Aorta (tissue), 5 donors: ENCODE measurements at regions of chr17 and their contacts with region 1.

Region 1: DNA sequence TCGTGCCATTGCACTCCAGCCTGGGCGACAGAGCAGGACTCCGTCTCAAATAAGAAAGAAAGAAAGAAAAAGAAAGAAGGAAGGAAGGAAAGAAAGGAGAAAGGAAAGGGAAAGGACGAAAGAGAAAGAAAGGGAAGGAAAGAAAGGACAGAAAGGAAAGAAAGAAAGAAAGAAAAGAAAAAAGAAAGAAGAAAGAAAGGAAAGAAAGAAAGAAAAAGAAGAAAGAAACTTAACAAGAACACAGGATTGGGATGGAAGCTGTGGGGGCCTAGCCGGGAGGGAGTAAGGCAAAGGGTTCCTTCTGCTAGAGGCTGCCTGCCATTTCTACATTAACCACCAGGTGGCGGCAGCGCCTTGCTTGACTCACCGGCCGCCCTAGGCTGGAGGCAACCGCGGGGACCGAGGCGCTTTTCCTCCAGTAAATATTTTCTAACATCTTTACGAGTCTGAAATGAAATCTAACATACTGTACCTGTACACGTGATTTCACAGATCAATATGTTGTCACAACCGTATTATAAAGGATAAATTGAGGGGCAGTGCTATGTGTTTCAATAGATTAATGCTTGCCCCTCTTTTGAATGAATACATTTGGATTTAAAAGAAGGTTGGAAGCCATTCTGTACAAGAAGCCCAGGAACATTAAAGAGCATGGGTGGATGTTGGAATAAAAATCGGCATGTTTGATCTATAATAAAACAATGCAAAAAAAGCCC is 6.1 kb downstream of the GJD3 start:
- DNase-seq: peak; percentile 92 to 97
- ATAC-seq: peak; percentile 88
- H3K4me3 ChIP-seq: no peak overlapping the region
- H3K27ac ChIP-seq: no peak overlapping the region
- H3K4me1 ChIP-seq: no peaks in the 10 kb centered on the region
- H3K27me3 ChIP-seq: no peaks in the 10 kb centered on the region

Region 2: DNA sequence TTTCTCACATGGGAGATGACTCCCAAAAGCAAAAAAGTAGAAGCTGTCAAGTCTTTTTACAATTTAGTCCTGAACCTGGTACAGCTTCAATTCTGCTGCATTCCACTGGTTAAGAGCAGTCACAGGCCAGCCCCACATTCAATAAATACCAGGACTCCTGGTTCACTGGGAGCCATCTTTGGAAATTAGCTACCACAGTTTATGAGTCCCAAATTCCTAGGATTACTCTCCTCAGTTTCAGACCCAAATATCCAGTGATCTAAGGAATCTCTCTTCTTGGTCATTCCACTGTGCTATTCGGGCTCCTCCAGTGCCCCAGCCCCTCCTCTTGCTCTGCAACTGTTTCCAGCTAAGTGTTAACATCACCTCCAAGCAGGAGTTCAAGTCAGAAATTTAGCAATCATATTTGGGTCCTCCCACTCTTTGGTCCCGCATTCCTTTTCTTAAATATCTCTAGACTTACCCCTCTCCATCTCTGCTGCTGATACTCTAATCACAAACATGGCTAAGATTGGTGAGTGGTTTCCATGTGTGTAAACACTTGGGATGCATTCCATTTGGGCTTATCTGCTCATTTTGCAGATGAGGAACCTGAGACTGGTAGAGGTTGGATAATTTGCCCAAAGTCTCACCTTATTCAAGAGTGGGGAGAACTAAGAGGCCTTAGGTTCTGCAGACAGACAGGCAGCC is 148.9 kb before region 1 on chr17:
- intact Hi-C with region 1: loop called in 1 of 2 experiments (anchors 10 kb)
- DNase-seq: no peak
- ATAC-seq: no peak
- H3K4me3 ChIP-seq: no peak overlapping the region
- H3K27ac ChIP-seq: no peak overlapping the region
- H3K4me1 ChIP-seq: no peaks in the 10 kb centered on the region
- H3K27me3 ChIP-seq: no peaks in the 10 kb centered on the region

Region 3: GRCh38 chr17:40303009-40303657 is 55.3 kb before region 1 on chr17:
- intact Hi-C with region 1: loop called (anchors 1 to 2 kb)
- DNase-seq: no peak
- ATAC-seq: peak; percentile 74
- H3K4me3 ChIP-seq: no peak overlapping the region
- H3K27ac ChIP-seq: no peak overlapping the region
- H3K4me1 ChIP-seq: no peaks in the 10 kb centered on the region
- H3K27me3 ChIP-seq: no peaks in the 10 kb centered on the region

Region 4: GRCh38 chr17:40417609-40418427 is 59.3 kb after region 1 on chr17 and contains the start of gene TOP2A:
- intact Hi-C with region 1: loop called (anchors 2 to 5 kb)
- DNase-seq: peak; percentile 93 to 96
- ATAC-seq: peak; percentile 100
- H3K4me3 ChIP-seq: peak within 1 kb of the TSS; percentile 22 to 54
- H3K27ac ChIP-seq: peak within 1 kb of the TSS in 1 of 2 donors; percentile 18
- H3K4me1 ChIP-seq: no peaks in the 10 kb centered on the region
- H3K27me3 ChIP-seq: no peaks in the 10 kb centered on the region
- total RNA-seq, gene TOP2A: 1.8 to 4.4 TPM

Region 5: GRCh38 chr17:40531051-40531991 is 172.8 kb after region 1 on chr17:
- intact Hi-C with region 1: loop called (anchors 5 kb)
- DNase-seq: peak in 1 of 2 donors; percentile 54
- ATAC-seq: no peak
- H3K4me3 ChIP-seq: no peak overlapping the region
- H3K27ac ChIP-seq: no peak overlapping the region
- H3K4me1 ChIP-seq: no peaks in the 10 kb centered on the region
- H3K27me3 ChIP-seq: no peaks in the 10 kb centered on the region

Region 6: GRCh38 chr17:40536295-40537171 is 178.1 kb after region 1 on chr17:
- intact Hi-C with region 1: loop called (anchors 5 kb)
- DNase-seq: peak; percentile 61 to 83
- ATAC-seq: peak; percentile 46
- H3K4me3 ChIP-seq: no peak overlapping the region
- H3K27ac ChIP-seq: no peak overlapping the region
- H3K4me1 ChIP-seq: peaks cover 0 to 2% of the 10 kb centered on the region in 2 donors
- H3K27me3 ChIP-seq: no peaks in the 10 kb centered on the region